PC-9 (cell line): ENCODE measurements at regions of chr3 and their contacts with region 1.

Region 1: DNA sequence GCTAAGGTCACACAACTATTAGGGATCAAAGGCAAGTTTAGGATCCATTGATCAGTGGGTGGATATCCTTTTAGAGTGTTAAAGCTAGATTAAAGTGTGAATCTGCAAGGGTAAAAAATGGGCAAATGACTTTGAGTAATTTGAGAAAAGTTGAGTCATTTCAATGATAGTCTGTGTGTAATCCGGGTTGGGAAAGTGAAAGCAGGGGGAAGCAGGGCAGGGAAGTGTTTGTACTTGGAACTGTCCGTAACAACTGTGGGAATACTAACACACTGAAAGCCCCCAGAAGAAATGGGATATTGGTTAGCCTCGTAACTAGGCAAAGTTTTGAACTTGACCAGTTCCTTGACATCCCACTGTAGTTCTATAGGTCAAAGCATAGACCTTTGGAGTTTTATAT is 187.2 kb upstream of the SLITRK3 start:
- DNase-seq: no peak
- H3K4me3 ChIP-seq: no peak overlapping the region
- H3K27ac ChIP-seq: no peak overlapping the region
- H3K4me1 ChIP-seq: no peaks in the 10 kb centered on the region
- H3K27me3 ChIP-seq: no peaks in the 10 kb centered on the region
- CTCF ChIP-seq: no peak

Region 2: GRCh38 chr3:165359005-165359404 is 24.4 kb before region 1 on chr3:
- CTCF ChIA-PET with region 1: no interaction called
- POLR2A ChIA-PET with region 1: no interaction called
- intact Hi-C with region 1: loop called (anchors 2 kb)
- DNase-seq: no peak
- H3K4me3 ChIP-seq: no peak overlapping the region
- H3K27ac ChIP-seq: no peak overlapping the region
- H3K4me1 ChIP-seq: no peaks in the 10 kb centered on the region
- H3K27me3 ChIP-seq: no peaks in the 10 kb centered on the region
- CTCF ChIP-seq: no peak

Region 3: GRCh38 chr3:166205158-166205557 is 821.8 kb after region 1 on chr3:
- CTCF ChIA-PET with region 1: no interaction called
- POLR2A ChIA-PET with region 1: no interaction called
- intact Hi-C with region 1: no loop called
- DNase-seq: no peak
- H3K4me3 ChIP-seq: no peak overlapping the region
- H3K27ac ChIP-seq: no peak overlapping the region
- H3K4me1 ChIP-seq: no peaks in the 10 kb centered on the region
- H3K27me3 ChIP-seq: no peaks in the 10 kb centered on the region
- CTCF ChIP-seq: no peak